Activated CD4-positive, alpha-beta T cell treated with anti-CD3 and anti-CD28 coated beads, Interleukin-2, amount 10 ng/mL, durations not matched to agents 24 days and 14 days (primary cell): ENCODE measurements at regions of chr6 and their contacts with region 1.

Region 1: GRCh38 chr6:11144393-11144851 is 32.9 kb upstream of the ERVFRD-1 start:
- DNase-seq: peak; percentile 93
- H3K4me3 Mint-ChIP-seq: no peak overlapping the region
- H3K27ac Mint-ChIP-seq: no peak overlapping the region
- H3K4me1 Mint-ChIP-seq: peaks cover 13% of the 10 kb centered on the region
- H3K27me3 Mint-ChIP-seq: no peaks in the 10 kb centered on the region

Region 2: DNA sequence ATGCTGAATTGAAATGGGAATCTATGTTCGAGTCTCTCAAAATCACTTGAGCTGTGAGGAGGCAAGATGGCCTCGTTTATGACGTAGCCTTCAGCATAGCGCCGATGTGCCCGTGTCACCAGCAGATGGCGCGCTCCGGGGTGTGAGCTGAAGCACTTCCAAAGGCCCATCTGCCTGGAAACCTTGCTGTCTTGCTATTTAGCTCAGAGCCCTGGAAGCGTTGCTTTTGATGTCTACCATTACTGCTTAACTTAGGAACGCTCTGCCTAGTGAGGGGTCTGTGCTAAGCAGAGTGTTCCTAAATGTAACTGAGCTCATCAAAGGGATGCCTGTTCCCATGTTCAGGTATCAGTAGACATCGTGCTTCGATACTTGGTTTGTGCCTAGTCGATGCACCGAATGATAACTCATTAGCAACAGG is 189.8 kb before region 1 on chr6:
- intact Hi-C with region 1: loop called (anchors 10 kb)
- DNase-seq: peak; percentile 90
- H3K4me3 Mint-ChIP-seq: no peak overlapping the region
- H3K27ac Mint-ChIP-seq: no peak overlapping the region
- H3K4me1 Mint-ChIP-seq: no peaks in the 10 kb centered on the region
- H3K27me3 Mint-ChIP-seq: peaks cover 11% of the 10 kb centered on the region

Region 3: GRCh38 chr6:11093589-11094410 is 50.6 kb before region 1 on chr6 and contains the start of gene SMIM13:
- intact Hi-C with region 1: loop called (anchors 5 kb)
- DNase-seq: peak; percentile 99
- H3K4me3 Mint-ChIP-seq: peak within 1 kb of the TSS; percentile 92
- H3K27ac Mint-ChIP-seq: peak within 1 kb of the TSS; percentile 95
- H3K4me1 Mint-ChIP-seq: peaks cover 26% of the 10 kb centered on the region
- H3K27me3 Mint-ChIP-seq: peaks cover 2% of the 10 kb centered on the region
- total RNA-seq, gene SMIM13: 15.2 and 15.6 TPM in 2 replicates

Region 4: GRCh38 chr6:11172501-11173332 is 28.3 kb after region 1 on chr6:
- intact Hi-C with region 1: loop called (anchors 1 kb)
- DNase-seq: peak; percentile 92
- H3K4me3 Mint-ChIP-seq: peak overlapping the region; percentile 32
- H3K27ac Mint-ChIP-seq: peak overlapping the region; percentile 21
- H3K4me1 Mint-ChIP-seq: peaks cover 21% of the 10 kb centered on the region
- H3K27me3 Mint-ChIP-seq: no peaks in the 10 kb centered on the region

Region 5: GRCh38 chr6:11236076-11236750 is 91.8 kb after region 1 on chr6:
- intact Hi-C with region 1: no loop called
- DNase-seq: peak; percentile 86
- H3K4me3 Mint-ChIP-seq: peak overlapping the region; percentile 20
- H3K27ac Mint-ChIP-seq: peak overlapping the region; percentile 66
- H3K4me1 Mint-ChIP-seq: peaks cover 40% of the 10 kb centered on the region
- H3K27me3 Mint-ChIP-seq: no peaks in the 10 kb centered on the region

Region 6: DNA sequence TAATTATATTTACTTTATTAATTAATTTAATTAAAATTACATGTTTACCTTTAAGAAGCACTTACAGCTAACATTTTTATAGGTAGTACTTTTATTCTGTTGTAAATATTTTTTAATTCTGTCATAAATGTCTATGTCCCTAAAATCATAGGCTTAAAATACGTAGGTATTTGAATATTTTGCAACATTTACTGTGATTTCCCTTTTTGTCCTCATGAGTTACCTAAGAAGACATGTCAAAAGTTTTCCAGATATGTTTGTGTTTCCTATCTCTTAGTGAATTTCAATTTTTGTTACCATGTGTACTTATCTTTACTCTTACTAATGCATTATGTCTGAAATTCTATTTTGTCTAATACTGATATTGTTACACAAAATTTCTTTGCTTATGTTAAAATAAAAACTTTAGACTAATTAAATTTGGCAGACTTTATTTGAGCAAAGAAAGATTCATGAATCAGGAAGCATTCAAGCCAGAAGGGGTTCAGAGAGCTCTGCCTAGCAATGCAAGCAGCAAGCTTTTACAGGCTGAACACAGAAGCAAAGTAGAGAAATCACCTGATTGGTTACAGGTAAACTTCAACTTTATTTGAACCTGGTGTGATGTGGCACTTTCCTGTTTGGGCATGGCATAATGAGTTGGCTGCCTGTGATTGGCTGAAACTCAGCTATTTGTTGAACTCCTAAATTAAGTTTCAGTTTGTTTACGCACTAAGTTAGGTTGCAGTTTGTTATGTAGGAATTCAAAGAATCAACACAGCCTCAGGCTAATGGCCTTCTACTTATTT is 269.9 kb after region 1 on chr6:
- intact Hi-C with region 1: loop called (anchors 5 kb)
- DNase-seq: peak; percentile 78
- H3K4me3 Mint-ChIP-seq: no peak overlapping the region
- H3K27ac Mint-ChIP-seq: peak overlapping the region; percentile 41
- H3K4me1 Mint-ChIP-seq: peaks cover 44% of the 10 kb centered on the region
- H3K27me3 Mint-ChIP-seq: no peaks in the 10 kb centered on the region

Region 7: GRCh38 chr6:11496152-11497060 is 352.0 kb after region 1 on chr6:
- intact Hi-C with region 1: loop called (anchors 1 kb)
- DNase-seq: peak; percentile 93
- H3K4me3 Mint-ChIP-seq: no peak overlapping the region
- H3K27ac Mint-ChIP-seq: no peak overlapping the region
- H3K4me1 Mint-ChIP-seq: peaks cover 10% of the 10 kb centered on the region
- H3K27me3 Mint-ChIP-seq: no peaks in the 10 kb centered on the region

Region 8: DNA sequence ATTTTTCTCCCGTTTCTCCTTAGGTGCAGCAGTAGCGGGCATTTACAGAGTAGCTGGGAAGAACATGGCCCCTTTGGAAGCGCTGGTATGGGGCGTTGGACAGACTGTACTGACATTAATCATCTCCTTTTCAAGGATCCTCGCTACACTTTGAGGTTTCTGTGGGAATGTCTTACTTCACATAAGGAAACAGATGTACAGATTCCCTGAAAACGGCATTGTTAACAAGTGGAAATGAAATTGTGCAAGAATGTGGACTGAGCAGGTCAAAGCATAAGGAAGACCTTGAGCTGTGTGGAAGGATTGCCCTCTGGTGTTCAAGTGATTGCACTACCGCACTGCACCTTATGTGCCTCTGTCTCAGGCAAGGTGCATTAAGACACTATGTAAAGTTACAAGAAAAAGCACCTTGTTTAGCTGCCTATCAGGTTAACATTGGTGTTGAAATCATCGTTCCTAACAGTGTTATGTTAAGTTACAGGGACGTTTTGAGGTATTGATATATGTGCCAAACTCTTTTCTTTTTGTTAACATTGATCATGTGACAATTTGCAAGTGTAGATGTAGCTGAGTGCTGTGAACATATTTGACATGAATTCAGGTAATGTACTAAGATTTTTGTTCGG is 431.1 kb after region 1 on chr6:
- intact Hi-C with region 1: loop called (anchors 1 kb)
- DNase-seq: peak; percentile 85
- H3K4me3 Mint-ChIP-seq: no peak overlapping the region
- H3K27ac Mint-ChIP-seq: no peak overlapping the region
- H3K4me1 Mint-ChIP-seq: no peaks in the 10 kb centered on the region
- H3K27me3 Mint-ChIP-seq: no peaks in the 10 kb centered on the region